ENCODE measurements at regions of chr4 and their contacts with region 1.

Region 1: DNA sequence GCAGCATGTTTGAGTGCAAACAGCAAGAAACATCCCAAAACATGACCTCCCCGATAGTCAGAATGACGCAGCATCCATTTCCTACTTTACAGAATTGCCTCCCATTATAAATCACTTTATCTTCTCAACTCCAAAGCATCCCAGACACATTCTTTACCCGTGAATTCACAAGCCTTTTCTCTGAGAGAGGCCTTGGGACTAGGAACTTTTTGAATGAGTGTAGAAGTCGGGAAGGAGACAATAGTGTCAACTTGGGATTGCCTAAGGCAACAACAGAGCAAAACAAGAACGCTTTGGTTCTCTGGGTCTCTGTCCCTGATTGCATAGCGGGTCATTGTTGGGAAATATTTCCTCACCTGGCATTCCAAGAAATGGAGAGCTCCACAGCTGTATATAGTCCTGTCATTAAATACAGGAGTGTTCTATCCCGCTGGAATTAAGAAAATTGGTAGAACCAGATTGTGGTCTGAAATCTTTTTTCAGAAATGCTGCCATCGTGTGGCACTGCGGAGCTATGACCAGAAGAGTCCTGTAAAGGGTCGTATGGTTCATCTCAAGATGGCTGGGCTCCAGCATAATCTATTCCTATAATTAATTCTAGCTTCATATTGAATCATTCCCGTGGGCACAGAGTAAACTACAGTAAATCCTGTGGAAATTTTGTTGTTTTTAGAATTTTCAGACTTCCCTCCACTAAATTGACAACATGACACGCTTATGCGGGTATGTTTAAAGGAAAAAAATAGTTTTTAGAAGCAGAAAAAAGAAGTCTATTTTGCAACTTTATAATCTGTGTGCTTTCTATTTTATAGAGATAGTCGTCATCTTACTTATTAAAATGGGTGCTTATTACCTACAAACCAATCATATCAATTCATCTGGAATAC is 2.0 kb upstream of the SPP1 start:
- DNase-seq: peak; percentile 40
- CTCF ChIP-seq: peak; percentile 77

Region 2: GRCh38 chr4:87953826-87954225 is 19.7 kb before region 1 on chr4:
- CTCF ChIA-PET with region 1: interaction called, 20 read pairs
- POLR2A ChIA-PET with region 1: no interaction called
- DNase-seq: no peak
- CTCF ChIP-seq: no peak

Region 3: DNA sequence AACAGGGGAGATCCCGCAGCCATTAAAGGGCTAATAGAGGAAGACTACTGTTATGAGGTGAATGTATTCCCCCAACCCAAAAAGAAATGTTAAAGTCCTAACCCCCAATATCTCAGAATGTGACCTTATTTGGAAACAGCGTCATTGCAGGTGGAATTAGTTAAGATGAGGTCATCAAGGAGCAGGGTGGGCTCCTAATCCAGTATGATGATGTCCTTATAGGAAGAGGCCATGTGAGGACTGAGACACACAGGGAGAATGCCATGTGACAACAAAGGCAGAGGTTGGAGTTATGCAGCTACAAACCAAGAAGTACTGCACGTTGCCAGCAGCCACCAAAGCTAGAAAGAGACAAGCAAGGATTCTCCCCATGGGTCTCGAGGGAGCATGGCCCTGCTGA is 16.2 kb after region 1 on chr4:
- CTCF ChIA-PET with region 1: interaction called, 11 read pairs
- POLR2A ChIA-PET with region 1: no interaction called
- DNase-seq: no peak
- CTCF ChIP-seq: no peak

Region 4: GRCh38 chr4:88147799-88148217 is 174.3 kb after region 1 on chr4:
- CTCF ChIA-PET with region 1: no interaction called
- POLR2A ChIA-PET with region 1: no interaction called
- DNase-seq: no peak
- CTCF ChIP-seq: no peak